ENCODE measurements at regions of chr6 and their contacts with region 1.

Region 1: DNA sequence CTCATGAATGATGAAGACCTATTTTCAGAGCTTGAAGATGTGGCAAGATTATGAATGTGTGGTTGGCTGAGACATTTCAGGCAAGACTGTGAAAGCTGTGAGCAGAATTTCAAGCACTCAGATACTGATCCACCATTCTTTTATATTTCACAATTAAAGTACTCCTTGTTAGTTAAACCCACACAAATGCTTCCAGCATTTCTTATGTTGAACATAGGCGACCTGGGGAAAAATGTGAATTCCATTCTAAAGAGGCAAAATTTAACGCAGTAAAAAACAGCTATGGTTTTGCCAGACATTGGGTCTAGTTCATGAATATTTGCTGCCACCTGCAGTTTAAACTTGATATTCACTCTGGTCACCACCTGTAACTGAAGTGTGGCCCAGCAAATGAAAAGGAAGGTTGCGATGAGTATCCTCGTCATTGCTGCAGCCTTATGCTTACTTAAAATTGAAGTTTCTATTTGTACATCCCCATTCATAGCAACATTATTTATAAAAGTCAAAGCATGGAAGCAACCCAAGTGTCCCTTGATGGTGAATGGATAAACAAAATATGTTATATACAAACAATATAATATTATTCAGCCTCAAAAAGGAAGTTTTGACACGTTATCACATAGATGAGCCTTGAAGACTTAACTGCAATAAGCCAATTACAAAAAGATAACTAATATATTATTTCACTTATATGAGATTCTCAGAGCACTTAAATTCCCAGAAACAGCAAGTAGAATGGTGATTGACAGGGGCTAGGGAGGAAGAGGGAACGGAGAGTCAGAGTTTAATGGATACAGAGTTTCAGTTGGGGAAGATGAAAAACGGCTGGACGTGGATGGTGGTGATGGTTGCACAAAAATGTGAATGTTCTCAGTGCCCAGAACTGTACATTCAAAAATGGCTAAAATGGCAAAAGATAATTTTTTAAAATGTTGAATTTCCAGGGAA is 32.4 kb upstream of the FAM184A start:
- DNase-seq: peak; percentile 27
- ATAC-seq: peak; percentile 95
- H3K4me3 ChIP-seq: no peak overlapping the region
- H3K27ac ChIP-seq: no peak overlapping the region
- H3K4me1 ChIP-seq: no peaks in the 10 kb centered on the region
- H3K27me3 ChIP-seq: no peaks in the 10 kb centered on the region; the same call in 1 of the 2 replicates
- CTCF ChIP-seq: peak; percentile 75

Region 2: DNA sequence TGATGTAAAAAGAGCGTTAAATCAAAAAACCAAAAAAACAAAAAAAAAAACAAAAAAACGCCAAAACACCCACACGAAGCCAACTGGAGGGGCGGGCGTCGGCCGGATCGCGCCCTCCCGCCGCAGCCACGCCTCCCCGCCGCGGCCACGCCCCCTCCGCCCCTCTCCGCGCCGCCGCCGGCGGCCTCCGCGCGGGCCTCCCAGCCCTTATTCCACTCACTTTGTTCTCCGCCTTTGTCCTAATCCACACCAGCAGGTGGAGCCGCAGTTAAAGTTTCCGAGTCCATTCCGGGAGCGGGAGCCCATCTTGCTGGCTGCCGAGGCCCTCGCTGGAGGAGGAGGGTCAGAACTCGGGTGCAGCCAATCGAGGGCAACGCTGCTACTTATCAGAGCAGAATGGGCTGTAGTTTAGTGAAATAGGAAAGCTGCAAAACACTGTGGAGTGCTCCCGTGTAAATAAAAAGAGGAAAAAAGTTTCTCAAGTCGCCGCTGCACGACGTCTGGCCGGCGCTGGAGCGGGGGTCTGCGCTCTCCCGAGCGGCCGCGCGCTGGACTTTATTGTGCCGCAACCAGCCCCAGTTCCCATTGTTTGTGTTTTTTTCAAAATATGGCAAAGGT is 217.0 kb before region 1 on chr6 and contains the start of gene ASF1A:
- CTCF ChIA-PET with region 1: interaction called, 5 read pairs
- POLR2A ChIA-PET with region 1: interaction called, 3 read pairs
- in situ Hi-C with region 1: no loop called
- intact Hi-C with region 1: loop called (anchors 5 kb)
- DNase-seq: peak; percentile 93
- ATAC-seq: peak; percentile 93
- H3K4me3 ChIP-seq: peak within 1 kb of the TSS; percentile 91 to 98
- H3K27ac ChIP-seq: peak within 1 kb of the TSS; percentile 96
- H3K4me1 ChIP-seq: peaks cover 35% of the 10 kb centered on the region
- H3K27me3 ChIP-seq: no peaks in the 10 kb centered on the region
- CTCF ChIP-seq: peak; percentile 91
- total RNA-seq, gene ASF1A: 28.5 TPM

Region 3: GRCh38 chr6:118963003-118963402 is 147.9 kb before region 1 on chr6:
- CTCF ChIA-PET with region 1: interaction called, 19 read pairs
- POLR2A ChIA-PET with region 1: no interaction called
- in situ Hi-C with region 1: no loop called
- intact Hi-C with region 1: loop called (anchors 1 kb)
- DNase-seq: no peak
- ATAC-seq: no peak
- H3K4me3 ChIP-seq: no peak overlapping the region
- H3K27ac ChIP-seq: no peak overlapping the region
- H3K4me1 ChIP-seq: no peaks in the 10 kb centered on the region
- H3K27me3 ChIP-seq: no peaks in the 10 kb centered on the region
- CTCF ChIP-seq: no peak; the same call in 1 of the 2 replicates

Region 4: GRCh38 chr6:118968416-118968815 is 142.5 kb before region 1 on chr6:
- CTCF ChIA-PET with region 1: interaction called, 19 read pairs
- POLR2A ChIA-PET with region 1: no interaction called
- in situ Hi-C with region 1: no loop called
- intact Hi-C with region 1: loop called (anchors 1 kb)
- DNase-seq: peak; percentile 22
- ATAC-seq: no peak
- H3K4me3 ChIP-seq: no peak overlapping the region
- H3K27ac ChIP-seq: no peak overlapping the region
- H3K4me1 ChIP-seq: no peaks in the 10 kb centered on the region
- H3K27me3 ChIP-seq: no peaks in the 10 kb centered on the region
- CTCF ChIP-seq: peak; percentile 43; the same call in 1 of the 2 replicates

Region 5: GRCh38 chr6:119612911-119613381 is 502.1 kb after region 1 on chr6:
- CTCF ChIA-PET with region 1: no interaction called
- POLR2A ChIA-PET with region 1: no interaction called
- in situ Hi-C with region 1: no loop called
- intact Hi-C with region 1: no loop called
- DNase-seq: no peak
- ATAC-seq: no peak
- H3K4me3 ChIP-seq: no peak overlapping the region
- H3K27ac ChIP-seq: no peak overlapping the region
- H3K4me1 ChIP-seq: no peaks in the 10 kb centered on the region
- H3K27me3 ChIP-seq: no peaks in the 10 kb centered on the region
- CTCF ChIP-seq: no peak

Region 6: DNA sequence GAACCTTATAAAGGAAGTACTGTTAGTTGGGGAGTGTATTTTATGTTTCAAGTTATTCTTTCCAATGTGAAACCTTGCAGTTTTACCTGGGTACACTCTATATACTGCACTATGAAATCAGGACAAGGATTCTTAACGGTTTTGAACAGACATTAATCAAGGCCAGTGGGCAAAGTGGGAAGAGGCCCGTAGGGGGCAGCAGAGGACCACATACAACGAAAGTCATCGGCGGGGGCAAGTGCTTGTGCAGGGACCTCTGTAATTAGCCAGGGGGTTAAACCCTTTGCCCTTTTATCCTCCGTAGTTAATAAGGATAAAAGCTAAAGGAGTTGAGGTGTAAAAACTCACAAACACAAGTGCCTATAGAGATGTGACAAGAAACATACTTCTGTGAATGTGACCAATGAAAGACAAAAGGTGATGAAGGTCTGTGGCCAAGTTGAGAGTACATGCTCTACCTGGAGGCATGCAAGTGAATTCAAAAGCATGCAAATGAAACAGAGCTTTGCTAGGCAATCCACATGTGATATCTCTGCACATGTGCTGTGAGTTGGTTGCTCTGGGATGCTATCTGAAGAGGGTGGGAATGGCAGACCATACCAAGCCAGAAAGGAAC is 631.4 kb after region 1 on chr6:
- CTCF ChIA-PET with region 1: no interaction called
- POLR2A ChIA-PET with region 1: no interaction called
- in situ Hi-C with region 1: no loop called
- intact Hi-C with region 1: no loop called
- DNase-seq: peak; percentile 18
- ATAC-seq: peak; percentile 85
- H3K4me3 ChIP-seq: no peak overlapping the region
- H3K27ac ChIP-seq: no peak overlapping the region
- H3K4me1 ChIP-seq: no peaks in the 10 kb centered on the region
- H3K27me3 ChIP-seq: no peaks in the 10 kb centered on the region
- CTCF ChIP-seq: peak; percentile 86